ENCODE measurements at regions of chr20 and their contacts with region 1.

Region 1: GRCh38 chr20:17898548-17898994 is 70.0 kb downstream of the SNX5 start:
- DNase-seq: peak; percentile 76 to 81
- ATAC-seq: peak; percentile 81
- H3K4me3 ChIP-seq: no peak overlapping the region
- H3K27ac ChIP-seq: no peak overlapping the region
- H3K4me1 ChIP-seq: no peaks in the 10 kb centered on the region
- H3K27me3 ChIP-seq: no peaks in the 10 kb centered on the region

Region 2: GRCh38 chr20:17504898-17505635 is 393.5 kb before region 1 on chr20:
- intact Hi-C with region 1: loop called (anchors 5 kb)
- DNase-seq: peak; percentile 79 to 89
- ATAC-seq: peak; percentile 84
- H3K4me3 ChIP-seq: peak overlapping the region; percentile 33 to 45
- H3K27ac ChIP-seq: no peak overlapping the region
- H3K4me1 ChIP-seq: no peaks in the 10 kb centered on the region
- H3K27me3 ChIP-seq: no peaks in the 10 kb centered on the region

Region 3: DNA sequence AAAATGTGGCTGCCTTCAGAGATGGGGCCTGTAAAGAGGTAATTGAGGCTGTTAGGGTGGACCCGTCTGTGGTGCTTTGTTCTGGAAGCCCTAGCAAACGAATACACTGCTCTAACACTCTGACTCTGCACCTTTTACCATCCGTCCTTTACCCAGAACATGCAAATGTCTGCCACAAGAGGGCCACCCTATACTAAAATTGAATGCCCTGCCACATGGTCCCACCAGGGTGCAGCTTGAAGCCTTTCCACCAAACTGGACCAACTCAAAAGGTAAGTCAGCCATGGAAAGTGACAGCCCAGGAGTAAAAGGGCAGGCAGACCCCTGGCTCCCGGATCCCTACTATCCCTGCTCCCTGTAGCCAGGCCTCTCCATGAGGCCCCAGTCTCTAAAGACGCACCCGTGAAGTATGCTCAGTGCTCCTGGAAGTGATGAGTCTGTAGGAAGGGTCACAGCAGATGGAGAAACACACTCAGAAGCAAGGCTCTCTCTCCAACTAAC is 361.6 kb before region 1 on chr20:
- intact Hi-C with region 1: loop called in 1 of 2 experiments (anchors 10 kb)
- DNase-seq: peak; percentile 68 to 80
- ATAC-seq: peak; percentile 94
- H3K4me3 ChIP-seq: no peak overlapping the region
- H3K27ac ChIP-seq: peak overlapping the region in 1 of 2 donors; percentile 32
- H3K4me1 ChIP-seq: peaks cover 0 to 6% of the 10 kb centered on the region in 2 donors
- H3K27me3 ChIP-seq: no peaks in the 10 kb centered on the region

Region 4: DNA sequence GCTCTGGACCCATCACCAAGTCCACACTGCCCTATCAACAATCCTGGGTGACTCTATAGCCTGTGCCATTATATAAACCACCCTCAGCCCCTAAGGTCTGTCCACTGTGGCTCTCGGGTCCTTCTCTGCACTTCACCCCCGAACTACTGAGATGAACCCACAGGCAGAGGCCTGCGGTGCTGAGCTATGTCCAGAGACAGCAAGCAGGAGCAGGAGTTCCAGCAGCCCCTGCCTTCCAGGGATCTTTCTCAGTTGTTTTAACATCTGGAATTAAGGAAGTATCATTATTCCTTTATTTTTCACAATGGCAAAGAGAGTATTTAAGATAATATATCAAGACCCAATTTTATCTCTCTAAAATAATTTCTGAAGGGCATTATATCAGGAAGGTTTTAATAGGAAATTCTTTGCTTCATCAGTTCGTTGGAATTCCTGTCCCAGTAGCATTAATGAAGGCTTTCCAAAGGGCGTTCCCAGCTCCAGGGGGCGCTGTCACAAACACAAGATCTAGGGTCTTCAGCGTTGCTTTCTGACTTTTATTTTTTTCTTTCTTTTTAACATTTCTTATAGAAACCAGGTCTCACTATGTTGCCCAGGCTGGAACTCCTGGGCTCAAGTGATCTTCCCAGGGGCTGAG is 243.8 kb before region 1 on chr20:
- intact Hi-C with region 1: loop called in 1 of 2 experiments (anchors 10 kb)
- DNase-seq: peak in 1 of 2 donors; percentile 86
- ATAC-seq: no peak
- H3K4me3 ChIP-seq: no peak overlapping the region
- H3K27ac ChIP-seq: no peak overlapping the region
- H3K4me1 ChIP-seq: peaks cover 0 to 2% of the 10 kb centered on the region in 2 donors
- H3K27me3 ChIP-seq: no peaks in the 10 kb centered on the region

Region 5: DNA sequence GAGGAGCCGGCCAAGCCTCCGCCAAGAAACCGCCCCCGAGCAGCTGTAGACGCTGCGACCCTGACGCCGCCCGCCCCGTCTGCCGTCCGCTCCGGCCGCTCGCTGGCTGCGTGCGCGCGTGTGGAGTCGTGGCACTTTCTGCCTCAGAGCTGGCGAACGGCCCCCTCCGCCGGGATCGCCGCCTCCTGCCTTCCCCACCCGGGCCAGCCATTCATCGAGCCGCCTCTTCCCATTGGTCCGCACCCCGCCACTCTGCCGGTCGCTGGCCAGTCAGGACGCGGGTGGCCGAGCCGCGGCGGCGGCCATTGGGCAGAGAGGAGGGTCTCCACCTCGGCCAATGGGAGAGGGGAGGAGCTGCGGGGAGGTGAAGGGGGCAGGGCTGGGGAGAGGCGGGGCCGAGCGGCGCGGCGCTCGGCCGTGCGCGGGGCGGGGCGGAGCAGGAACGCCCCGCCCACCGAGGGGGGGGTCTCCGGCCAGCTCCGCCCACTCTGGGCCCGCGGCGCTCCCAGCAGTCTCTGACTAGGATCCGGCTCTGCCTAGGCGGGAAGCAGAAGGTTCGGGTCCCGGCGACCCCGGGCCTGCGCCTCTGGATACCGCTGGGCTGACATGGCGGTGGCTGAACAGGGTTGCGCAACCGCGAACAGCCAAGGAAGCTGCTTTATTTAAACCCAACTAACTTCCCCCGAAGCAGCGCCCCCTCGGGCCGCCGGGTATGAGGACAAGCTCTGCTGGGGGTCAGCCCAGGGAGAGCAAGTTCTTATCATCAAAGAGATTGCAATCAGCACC is 216.3 kb before region 1 on chr20 and contains the start of gene RRBP1:
- intact Hi-C with region 1: loop called (anchors 2 to 5 kb)
- DNase-seq: peak; percentile 99
- ATAC-seq: peak; percentile 97
- H3K4me3 ChIP-seq: peak within 1 kb of the TSS; percentile 81 to 95
- H3K27ac ChIP-seq: peak within 1 kb of the TSS; percentile 88
- H3K4me1 ChIP-seq: no peaks in the 10 kb centered on the region
- H3K27me3 ChIP-seq: no peaks in the 10 kb centered on the region
- total RNA-seq, gene RRBP1: 165 to 178 TPM

Region 6: DNA sequence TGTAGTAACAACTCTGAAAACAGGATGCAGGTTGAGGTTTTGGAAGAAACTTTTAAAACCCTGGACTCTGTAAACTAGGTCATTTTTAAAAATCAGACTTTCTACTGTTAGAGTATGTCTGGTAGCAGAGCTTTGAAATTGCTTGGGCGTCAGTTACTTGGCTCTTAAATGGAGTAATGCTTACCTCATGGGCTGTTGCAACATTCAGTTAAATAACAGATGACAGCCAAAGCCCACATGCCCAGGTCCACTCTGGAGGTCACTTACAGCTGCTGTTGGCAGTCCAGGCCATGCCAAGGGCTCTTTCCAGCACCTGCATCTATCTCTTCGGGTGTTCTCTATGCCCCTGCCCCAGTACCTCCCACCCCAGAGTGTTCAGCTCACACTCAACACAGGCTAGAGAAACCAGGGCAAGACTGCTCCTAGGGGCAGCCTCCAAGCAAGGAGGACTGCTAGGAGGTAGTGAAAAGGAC is 102.4 kb before region 1 on chr20:
- intact Hi-C with region 1: loop called in 1 of 2 experiments (anchors 5 kb)
- DNase-seq: peak in 1 of 2 donors; percentile 73
- ATAC-seq: peak; percentile 90
- H3K4me3 ChIP-seq: no peak overlapping the region
- H3K27ac ChIP-seq: peak overlapping the region; percentile 35 to 50
- H3K4me1 ChIP-seq: no peaks in the 10 kb centered on the region
- H3K27me3 ChIP-seq: no peaks in the 10 kb centered on the region

Region 7: DNA sequence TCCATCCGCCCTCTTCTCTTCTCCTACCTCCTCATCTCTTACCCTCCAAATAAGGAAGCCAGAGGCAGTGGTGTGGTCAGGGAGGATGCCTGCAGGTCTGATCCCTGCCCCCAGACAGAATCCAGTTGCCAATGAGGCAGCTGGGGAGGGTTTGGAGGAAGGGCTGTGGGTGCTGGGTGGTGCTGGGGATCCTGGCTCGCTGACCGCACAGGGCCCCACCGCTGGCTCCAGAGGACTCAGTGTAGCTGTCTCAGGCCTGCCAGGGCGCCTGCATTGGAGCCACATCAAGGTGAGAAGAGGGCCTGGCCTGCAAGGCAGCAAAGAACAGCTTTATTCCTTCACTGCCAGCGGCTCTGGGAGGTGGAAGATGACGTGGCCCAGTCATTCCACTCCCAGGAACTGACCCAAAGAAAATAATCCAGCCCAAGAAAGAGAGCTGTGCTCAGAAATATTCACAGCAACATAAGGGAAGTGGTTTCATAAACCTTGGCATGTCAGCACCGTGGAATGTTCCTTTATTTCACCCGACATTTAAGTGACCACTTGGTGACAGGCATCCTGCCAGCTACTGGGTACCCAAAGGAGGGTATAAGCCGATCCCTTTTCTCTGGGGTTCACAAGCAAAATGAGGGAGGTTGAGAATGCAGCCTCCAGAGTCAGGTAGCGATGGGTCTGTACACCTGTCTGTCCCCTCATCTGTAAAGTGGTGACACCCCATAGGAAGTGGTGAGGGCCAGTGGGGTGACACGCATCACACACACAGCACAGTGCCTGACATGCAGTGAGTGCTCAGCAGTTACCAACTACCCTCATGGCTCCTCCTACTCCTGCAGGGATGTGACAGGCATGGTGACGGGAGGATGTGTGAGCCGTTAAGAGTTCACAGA is 55.1 kb before region 1 on chr20:
- intact Hi-C with region 1: loop called in 1 of 2 experiments (anchors 5 kb)
- DNase-seq: peak; percentile 82 to 86
- ATAC-seq: peak; percentile 80
- H3K4me3 ChIP-seq: no peak overlapping the region
- H3K27ac ChIP-seq: peak overlapping the region; percentile 7 to 98
- H3K4me1 ChIP-seq: no peaks in the 10 kb centered on the region
- H3K27me3 ChIP-seq: no peaks in the 10 kb centered on the region

Region 8: DNA sequence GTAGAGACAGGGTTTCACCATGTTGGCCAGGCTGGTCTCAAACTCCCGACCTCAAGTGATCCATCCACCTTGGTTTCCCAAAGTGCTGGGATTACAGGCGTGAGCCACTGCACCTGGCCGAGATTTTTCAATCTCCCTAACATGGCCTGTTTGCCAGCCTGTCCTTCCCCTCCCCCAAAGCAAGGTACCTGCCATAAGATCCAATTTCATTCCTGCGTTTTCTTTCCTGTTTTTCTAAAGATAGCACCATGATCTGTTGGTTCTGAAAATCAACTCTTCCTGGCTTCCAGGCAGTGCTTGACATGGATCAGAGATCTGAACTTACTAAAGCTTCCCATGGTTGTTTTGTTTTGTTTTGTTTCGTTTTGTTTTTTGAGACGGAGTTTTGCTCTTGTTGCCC is 77.7 kb after region 1 on chr20:
- intact Hi-C with region 1: no loop called
- DNase-seq: no peak
- ATAC-seq: no peak
- H3K4me3 ChIP-seq: no peak overlapping the region
- H3K27ac ChIP-seq: no peak overlapping the region
- H3K4me1 ChIP-seq: no peaks in the 10 kb centered on the region
- H3K27me3 ChIP-seq: no peaks in the 10 kb centered on the region

Measured in aorta (tissue), 5 donors.